ENCODE measurements at regions of chr5 and their contacts with region 1.

Region 1: GRCh38 chr5:154189819-154190594 is 526 bp upstream of the GALNT10 start:
- DNase-seq: peak; percentile 82 to 87 (median 86)
- H3K4me3 ChIP-seq: peak overlapping the region; percentile 31 to 59
- H3K4me3 Mint-ChIP-seq: peak overlapping the region; percentile 88 to 95 (median 91)
- H3K27ac ChIP-seq: peak overlapping the region; percentile 64
- H3K27ac Mint-ChIP-seq: peak overlapping the region; percentile 68 to 90 (median 84)
- H3K4me1 ChIP-seq: peaks cover 36% of the 10 kb centered on the region
- H3K4me1 Mint-ChIP-seq: peaks cover 33 to 56% (median 42%) of the 10 kb centered on the region in 4 donors
- H3K27me3 ChIP-seq: no peaks in the 10 kb centered on the region
- H3K27me3 Mint-ChIP-seq: no peaks in the 10 kb centered on the region

Region 2: GRCh38 chr5:154214371-154215106 is 24.5 kb after region 1 on chr5:
- CTCF ChIA-PET with region 1: interaction called, 8 read pairs
- POLR2A ChIA-PET with region 1: interaction called, 24 read pairs
- intact Hi-C with region 1: no loop called
- DNase-seq: no peak
- H3K4me3 ChIP-seq: no peak overlapping the region
- H3K4me3 Mint-ChIP-seq: peak overlapping the region in 2 of 8 donors; percentile 19 to 30
- H3K27ac ChIP-seq: no peak overlapping the region
- H3K27ac Mint-ChIP-seq: peak overlapping the region in 5 of 7 donors; percentile 13 to 79 (median 42)
- H3K4me1 ChIP-seq: peaks cover 27% of the 10 kb centered on the region
- H3K4me1 Mint-ChIP-seq: peaks cover 22 to 68% (median 47%) of the 10 kb centered on the region in 4 donors
- H3K27me3 ChIP-seq: no peaks in the 10 kb centered on the region
- H3K27me3 Mint-ChIP-seq: no peaks in the 10 kb centered on the region

Region 3: GRCh38 chr5:154238776-154239481 is 48.9 kb after region 1 on chr5:
- CTCF ChIA-PET with region 1: interaction called, 12 read pairs
- POLR2A ChIA-PET with region 1: interaction called, 20 read pairs
- intact Hi-C with region 1: no loop called
- DNase-seq: no peak
- H3K4me3 ChIP-seq: no peak overlapping the region
- H3K4me3 Mint-ChIP-seq: no peak overlapping the region
- H3K27ac ChIP-seq: no peak overlapping the region
- H3K27ac Mint-ChIP-seq: peak overlapping the region in 2 of 7 donors; percentile 2 to 54
- H3K4me1 ChIP-seq: no peaks in the 10 kb centered on the region
- H3K4me1 Mint-ChIP-seq: peaks cover 16 to 47% (median 30%) of the 10 kb centered on the region in 4 donors
- H3K27me3 ChIP-seq: no peaks in the 10 kb centered on the region
- H3K27me3 Mint-ChIP-seq: no peaks in the 10 kb centered on the region

Region 4: GRCh38 chr5:154445422-154446182 is 255.6 kb after region 1 on chr5 and contains the start of gene SAP30L:
- CTCF ChIA-PET with region 1: interaction called, 3 read pairs
- POLR2A ChIA-PET with region 1: interaction called, 6 read pairs
- intact Hi-C with region 1: loop called (anchors 2 kb)
- DNase-seq: peak; percentile 93 to 99 (median 96)
- H3K4me3 ChIP-seq: peak within 1 kb of the TSS; percentile 95 to 99
- H3K4me3 Mint-ChIP-seq: peak within 1 kb of the TSS; percentile 97 to 100 (median 99)
- H3K27ac ChIP-seq: peak within 1 kb of the TSS; percentile 66
- H3K27ac Mint-ChIP-seq: peak within 1 kb of the TSS; percentile 83 to 100 (median 96)
- H3K4me1 ChIP-seq: peaks cover 46% of the 10 kb centered on the region
- H3K4me1 Mint-ChIP-seq: peaks cover 40 to 75% (median 52%) of the 10 kb centered on the region in 4 donors
- H3K27me3 ChIP-seq: no peaks in the 10 kb centered on the region
- H3K27me3 Mint-ChIP-seq: no peaks in the 10 kb centered on the region
- total RNA-seq, gene SAP30L: 36.9 to 47.5 TPM

Measured in CD4-positive, alpha-beta memory T cell (primary cell).